ENCODE measurements at regions of chr19 and their contacts with region 1.

Region 1: DNA sequence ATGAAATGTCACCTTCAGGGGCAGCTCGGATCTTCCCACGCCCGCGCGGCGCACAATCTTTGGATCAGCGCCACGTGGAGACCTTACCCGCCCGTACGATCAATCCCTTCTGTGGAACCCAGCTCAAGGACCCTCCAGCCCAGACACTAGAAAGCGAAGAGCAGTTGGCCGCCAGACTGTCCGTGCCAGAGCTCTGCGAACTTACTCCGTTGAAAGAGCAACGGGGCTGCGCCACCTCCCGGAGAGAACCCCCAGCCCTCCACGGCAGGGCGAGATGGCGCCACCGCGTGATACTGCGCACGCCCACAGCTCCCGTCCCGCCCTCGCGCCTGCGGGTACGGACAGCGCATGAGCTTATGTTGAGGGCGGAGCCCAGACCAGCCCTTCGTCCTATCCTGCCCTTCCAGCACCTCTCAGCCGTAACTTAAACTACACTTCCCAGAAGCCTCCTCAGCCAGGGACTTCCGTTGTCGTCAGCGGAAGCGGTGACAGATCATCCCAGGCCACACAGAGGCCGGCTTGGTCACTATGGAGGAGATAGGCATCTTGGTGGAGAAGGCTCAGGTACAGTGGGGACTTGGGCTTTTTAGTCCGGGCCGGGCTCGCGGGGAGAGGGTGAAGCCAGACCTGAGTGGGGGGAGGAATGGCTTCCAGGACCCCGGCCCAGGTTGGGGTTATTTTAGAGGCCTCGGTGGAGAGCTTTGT is at the start of gene PSMC4:
- DNase-seq: peak; percentile 95 to 98
- H3K4me3 ChIP-seq: peak within 1 kb of the TSS; percentile 90
- H3K27ac ChIP-seq: peak within 1 kb of the TSS; percentile 71
- H3K4me1 ChIP-seq: peaks cover 18% of the 10 kb centered on the region
- H3K27me3 ChIP-seq: no peaks in the 10 kb centered on the region
- CTCF ChIP-seq: peak; percentile 63
- total RNA-seq, gene PSMC4: 82.8 and 110 TPM in 2 replicates

Region 2: GRCh38 chr19:39833464-39834286 is 137.2 kb before region 1 on chr19 and contains the start of gene DYRK1B:
- CTCF ChIA-PET with region 1: no interaction called
- POLR2A ChIA-PET with region 1: interaction called, 11 read pairs
- intact Hi-C with region 1: no loop called
- DNase-seq: peak in 1 of 2 experiments; percentile 95
- H3K4me3 ChIP-seq: no peak within 1 kb of the TSS
- H3K27ac ChIP-seq: no peak within 1 kb of the TSS
- H3K4me1 ChIP-seq: no peaks in the 10 kb centered on the region
- H3K27me3 ChIP-seq: no peaks in the 10 kb centered on the region
- CTCF ChIP-seq: no peak
- total RNA-seq, gene DYRK1B: 29.9 and 39.5 TPM in 2 replicates

Region 3: DNA sequence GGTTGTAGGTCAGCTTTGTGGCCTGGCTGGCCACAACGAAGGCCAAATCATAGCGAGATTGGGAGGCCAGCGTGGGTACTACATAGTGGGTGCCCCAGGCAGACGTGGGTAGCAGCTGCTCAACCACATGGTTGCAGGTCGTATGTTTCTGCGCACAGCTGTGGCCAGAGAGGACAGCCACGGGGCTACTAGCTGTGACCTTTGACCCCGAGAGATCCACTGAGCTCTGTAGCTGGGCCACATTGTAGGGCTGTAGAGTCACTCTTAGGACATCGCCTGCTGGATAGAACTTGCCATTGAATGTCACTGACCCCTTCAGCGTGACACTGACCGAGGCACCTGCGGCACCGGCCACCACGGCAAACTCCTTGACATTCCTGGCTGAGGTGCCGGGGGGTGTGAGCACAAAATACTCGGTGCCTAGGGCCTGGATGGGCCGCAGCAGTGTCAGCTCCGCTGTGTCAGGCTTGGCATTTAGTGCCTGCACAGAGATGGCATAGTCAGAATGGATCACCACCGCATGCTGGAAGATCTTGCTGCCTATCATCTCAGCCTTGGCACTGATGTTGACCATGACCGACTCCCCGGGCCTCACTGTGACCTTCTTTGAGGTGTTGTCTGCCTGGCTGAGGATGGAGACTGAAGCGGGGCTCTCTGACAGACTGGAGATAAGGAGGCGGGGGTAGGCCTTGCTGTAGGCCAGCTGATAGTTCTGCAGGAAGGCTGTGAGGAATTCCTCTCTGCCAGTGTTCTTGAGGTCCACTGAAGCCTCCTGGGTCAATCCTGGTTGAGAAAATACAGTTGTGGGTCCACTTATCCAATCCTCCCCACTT is 43.1 kb before region 1 on chr19:
- CTCF ChIA-PET with region 1: no interaction called
- POLR2A ChIA-PET with region 1: no interaction called
- intact Hi-C with region 1: no loop called
- DNase-seq: no peak
- H3K4me3 ChIP-seq: no peak overlapping the region
- H3K27ac ChIP-seq: no peak overlapping the region
- H3K4me1 ChIP-seq: peaks cover 9% of the 10 kb centered on the region; the same call in 1 of the 2 replicates
- H3K27me3 ChIP-seq: no peaks in the 10 kb centered on the region
- CTCF ChIP-seq: no peak

Region 4: GRCh38 chr19:39983695-39984305 is 13.0 kb after region 1 on chr19:
- CTCF ChIA-PET with region 1: no interaction called
- POLR2A ChIA-PET with region 1: no interaction called
- intact Hi-C with region 1: no loop called
- DNase-seq: no peak
- H3K4me3 ChIP-seq: no peak overlapping the region
- H3K27ac ChIP-seq: no peak overlapping the region
- H3K4me1 ChIP-seq: no peaks in the 10 kb centered on the region
- H3K27me3 ChIP-seq: no peaks in the 10 kb centered on the region
- CTCF ChIP-seq: no peak

Region 5: DNA sequence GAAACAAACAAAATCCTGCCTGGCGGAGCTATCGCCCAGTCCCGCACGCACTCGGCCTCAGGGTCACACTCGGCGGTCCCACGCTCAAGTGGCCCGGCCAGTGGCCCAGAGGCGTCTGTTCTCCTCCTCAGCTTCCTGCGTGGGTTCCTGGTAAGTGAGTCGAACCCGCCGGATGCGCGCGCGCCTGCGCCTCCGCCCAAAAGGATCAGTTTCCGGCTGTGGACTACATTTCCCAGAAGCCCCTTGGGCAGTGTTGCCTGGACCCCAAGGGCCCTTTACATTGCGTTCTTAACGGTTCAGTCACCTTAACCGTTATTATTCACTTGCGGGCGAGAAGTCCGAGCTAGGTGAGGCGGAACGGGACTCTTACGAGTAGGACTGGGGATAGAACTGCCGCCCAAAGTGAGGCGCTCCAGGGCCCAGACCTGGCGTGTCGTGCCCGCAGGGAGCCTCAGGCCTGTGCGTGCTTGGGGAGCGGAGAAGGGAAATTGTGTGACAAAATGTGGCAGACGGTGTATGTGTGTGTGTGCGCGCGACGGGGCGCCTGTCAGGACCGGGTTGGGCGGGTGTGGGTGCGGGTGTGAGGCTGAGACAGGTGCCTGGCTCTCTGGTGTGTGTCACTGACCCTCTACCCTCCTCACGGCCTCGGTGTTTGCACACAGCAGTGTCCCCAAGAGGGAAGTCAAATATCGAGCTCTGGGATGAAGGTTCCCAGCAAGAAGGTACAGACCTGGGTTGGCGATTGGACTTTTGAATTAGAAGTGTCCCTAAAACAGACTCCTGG is 26.2 kb after region 1 on chr19 and contains the start of gene ZNF546:
- CTCF ChIA-PET with region 1: no interaction called
- POLR2A ChIA-PET with region 1: interaction called, 3 read pairs
- intact Hi-C with region 1: loop called (anchors 1 kb)
- DNase-seq: peak; percentile 57 to 81
- H3K4me3 ChIP-seq: peak within 1 kb of the TSS; percentile 91
- H3K27ac ChIP-seq: peak within 1 kb of the TSS; percentile 18; the same call in 1 of the 2 replicates
- H3K4me1 ChIP-seq: peaks cover 8% of the 10 kb centered on the region; the same call in 1 of the 2 replicates
- H3K27me3 ChIP-seq: no peaks in the 10 kb centered on the region
- CTCF ChIP-seq: no peak
- total RNA-seq, gene ZNF546: 1.9 and 3.6 TPM in 2 replicates